A549 (cell line): ENCODE measurements at regions of chr16 and their contacts with region 1.

Region 1: DNA sequence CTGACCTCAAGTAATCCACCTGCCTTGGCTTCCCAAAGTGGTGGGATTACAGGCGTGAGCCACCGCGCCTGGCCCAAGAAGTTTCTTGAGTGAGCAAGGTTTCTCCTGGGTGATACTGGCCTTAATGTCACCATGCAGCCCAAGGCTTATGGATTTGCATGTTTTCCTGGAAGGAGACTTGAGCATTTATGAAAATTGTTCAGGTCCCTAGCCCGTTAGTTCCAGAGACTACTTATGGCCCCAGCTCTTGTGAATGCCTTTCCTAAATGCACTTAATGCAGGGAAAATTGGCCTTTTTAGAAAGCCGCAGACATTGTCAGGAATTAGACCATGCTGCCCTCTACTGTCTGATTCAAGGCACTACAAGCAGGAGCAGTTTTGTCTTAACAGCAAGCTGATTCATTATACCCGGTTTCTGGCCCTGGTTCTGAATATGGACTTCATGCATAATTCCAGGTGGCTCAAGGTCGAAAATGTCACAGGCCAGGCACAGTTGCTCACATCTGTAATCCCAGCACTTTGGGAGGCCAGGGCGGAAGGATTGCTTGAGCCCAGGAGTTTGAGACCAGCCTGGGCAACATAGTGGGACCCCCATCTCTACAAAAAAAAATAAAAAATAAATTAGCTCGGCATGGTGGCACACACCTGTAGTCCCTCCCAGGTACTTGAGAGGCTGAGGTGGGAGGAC is 91.3 kb downstream of the SNX29 start:
- DNase-seq: peak; percentile 79 to 81
- ATAC-seq: peak; percentile 85 to 93
- H3K4me3 ChIP-seq: no peak overlapping the region
- H3K27ac ChIP-seq: no peak overlapping the region
- H3K4me1 ChIP-seq: no peaks in the 10 kb centered on the region
- CTCF ChIP-seq: peak; percentile 92
- EP300 ChIP-seq: no peak
- POLR2A ChIP-seq: no peak
- RAD21 ChIP-seq: peak; percentile 95 to 97

Region 2: GRCh38 chr16:11915644-11916523 is 152.0 kb before region 1 on chr16 and contains the start of gene GSPT1:
- CTCF ChIA-PET with region 1: interaction called, 11 read pairs
- POLR2A ChIA-PET with region 1: interaction called, 4 read pairs
- DNase-seq: peak; percentile 92 to 99
- ATAC-seq: peak; percentile 93 to 95
- H3K4me3 ChIP-seq: peak within 1 kb of the TSS; percentile 93
- H3K27ac ChIP-seq: peak within 1 kb of the TSS; percentile 96 to 99
- H3K4me1 ChIP-seq: peaks cover 33% of the 10 kb centered on the region
- CTCF ChIP-seq: no peak
- EP300 ChIP-seq: peak in 1 of 2 experiments; percentile 15; a peak in 1 of 5 replicates
- POLR2A ChIP-seq: peak; percentile 87
- RAD21 ChIP-seq: no peak
- polyA plus RNA-seq, gene GSPT1: 174 and 215 TPM in 2 replicates

Region 3: GRCh38 chr16:11964761-11965551 is 102.9 kb before region 1 on chr16 and contains the start of gene TNFRSF17:
- CTCF ChIA-PET with region 1: interaction called, 35 read pairs
- POLR2A ChIA-PET with region 1: no interaction called
- DNase-seq: no peak
- ATAC-seq: no peak
- H3K4me3 ChIP-seq: no peak within 1 kb of the TSS
- H3K27ac ChIP-seq: no peak within 1 kb of the TSS
- H3K4me1 ChIP-seq: no peaks in the 10 kb centered on the region
- CTCF ChIP-seq: no peak
- EP300 ChIP-seq: no peak
- POLR2A ChIP-seq: no peak
- RAD21 ChIP-seq: no peak
- polyA plus RNA-seq, gene TNFRSF17: not detected in 2 replicates

Region 4: GRCh38 chr16:11985250-11985649 is 82.6 kb before region 1 on chr16:
- CTCF ChIA-PET with region 1: interaction called, 23 read pairs
- POLR2A ChIA-PET with region 1: no interaction called
- DNase-seq: no peak
- ATAC-seq: no peak
- H3K4me3 ChIP-seq: no peak overlapping the region
- H3K27ac ChIP-seq: no peak overlapping the region
- H3K4me1 ChIP-seq: no peaks in the 10 kb centered on the region
- CTCF ChIP-seq: no peak
- EP300 ChIP-seq: no peak
- POLR2A ChIP-seq: no peak
- RAD21 ChIP-seq: no peak

Region 5: DNA sequence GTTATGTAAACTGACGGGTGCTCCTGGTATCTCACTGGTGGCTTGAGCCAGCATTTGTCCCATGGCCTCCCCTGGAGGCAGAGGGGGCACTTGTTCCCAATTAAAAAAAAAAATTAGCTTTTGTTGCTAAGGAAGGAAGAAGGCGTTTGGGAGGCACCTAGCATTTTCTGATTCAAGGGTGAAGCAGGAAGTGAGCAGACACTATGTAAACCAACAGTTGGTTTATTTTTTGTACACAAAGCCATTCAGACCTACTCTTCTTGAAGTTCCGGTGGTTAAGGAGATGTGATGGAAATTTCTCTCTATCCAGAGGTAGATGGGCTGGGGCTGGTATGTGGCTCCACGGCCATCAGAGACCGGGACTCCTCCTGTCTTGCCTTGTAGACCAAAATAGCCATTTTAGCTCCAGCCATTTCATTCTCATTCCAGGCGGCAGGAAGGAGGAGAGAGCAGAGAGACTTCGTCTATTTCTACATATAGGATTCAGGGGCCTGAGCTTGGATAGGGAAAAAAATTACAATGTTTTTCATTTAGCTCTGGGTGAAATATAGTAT is 11.6 kb after region 1 on chr16:
- CTCF ChIA-PET with region 1: interaction called, 23 read pairs
- POLR2A ChIA-PET with region 1: no interaction called
- DNase-seq: no peak
- ATAC-seq: no peak
- H3K4me3 ChIP-seq: no peak overlapping the region
- H3K27ac ChIP-seq: no peak overlapping the region
- H3K4me1 ChIP-seq: no peaks in the 10 kb centered on the region
- CTCF ChIP-seq: no peak
- EP300 ChIP-seq: no peak
- POLR2A ChIP-seq: no peak
- RAD21 ChIP-seq: no peak

Region 6: DNA sequence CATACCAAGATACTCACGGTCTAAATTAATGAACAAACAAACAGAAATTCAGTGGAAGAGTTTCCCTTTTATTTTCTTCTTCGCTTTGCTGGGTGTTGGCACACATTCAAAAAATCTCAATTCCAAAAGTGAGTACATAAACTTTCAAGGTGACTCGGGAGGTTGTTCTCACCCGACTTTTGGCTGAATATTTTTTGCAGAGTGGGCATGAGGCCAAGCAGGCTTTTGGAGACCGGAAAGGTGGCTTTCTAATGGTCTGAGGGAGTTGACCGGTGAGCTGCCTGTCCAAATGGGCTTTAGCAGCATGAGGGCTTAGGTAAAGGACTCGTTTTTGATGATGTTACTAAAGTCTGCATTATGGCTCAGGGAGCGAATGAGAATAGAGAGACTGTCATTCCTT is 417.1 kb after region 1 on chr16:
- CTCF ChIA-PET with region 1: no interaction called
- POLR2A ChIA-PET with region 1: no interaction called
- DNase-seq: no peak
- ATAC-seq: no peak
- H3K4me3 ChIP-seq: no peak overlapping the region
- H3K27ac ChIP-seq: no peak overlapping the region
- H3K4me1 ChIP-seq: no peaks in the 10 kb centered on the region
- CTCF ChIP-seq: no peak
- EP300 ChIP-seq: no peak
- POLR2A ChIP-seq: no peak
- RAD21 ChIP-seq: no peak